PC-9 (cell line): ENCODE measurements at regions of chr7 and their contacts with region 1.

Region 1: GRCh38 chr7:17234398-17235031 is 63.9 kb upstream of the AHR start:
- DNase-seq: peak; percentile 56 to 97
- H3K4me3 ChIP-seq: peak overlapping the region; percentile 21; the same call in 1 of the 2 replicates
- H3K27ac ChIP-seq: peak overlapping the region; percentile 67
- H3K4me1 ChIP-seq: peaks cover 32% of the 10 kb centered on the region
- H3K27me3 ChIP-seq: no peaks in the 10 kb centered on the region
- CTCF ChIP-seq: no peak

Region 2: DNA sequence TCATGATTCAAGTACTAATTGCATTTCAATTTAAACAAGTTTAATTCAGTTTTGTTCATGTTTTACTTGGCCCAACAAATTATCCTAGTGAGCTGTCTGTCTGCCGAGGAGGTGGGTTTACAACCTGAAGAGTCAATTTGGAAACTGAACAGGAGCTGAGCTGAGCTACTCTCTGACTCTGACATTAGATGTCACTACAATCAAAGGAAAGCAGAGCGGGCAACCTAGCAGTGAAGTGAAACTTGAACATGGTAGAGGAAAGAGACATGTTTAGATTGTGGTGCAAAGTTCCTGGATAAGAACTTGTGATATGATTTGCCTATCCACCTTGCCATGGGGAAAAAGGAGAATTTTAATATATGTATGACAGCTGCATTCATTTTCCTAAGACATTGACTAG is 343.2 kb before region 1 on chr7:
- CTCF ChIA-PET with region 1: no interaction called
- POLR2A ChIA-PET with region 1: no interaction called
- intact Hi-C with region 1: no loop called
- DNase-seq: peak; percentile 44 to 73
- H3K4me3 ChIP-seq: no peak overlapping the region
- H3K27ac ChIP-seq: no peak overlapping the region
- H3K4me1 ChIP-seq: peaks cover 15% of the 10 kb centered on the region
- H3K27me3 ChIP-seq: no peaks in the 10 kb centered on the region
- CTCF ChIP-seq: peak; percentile 84

Region 3: GRCh38 chr7:17195576-17195975 is 38.9 kb before region 1 on chr7:
- CTCF ChIA-PET with region 1: no interaction called
- POLR2A ChIA-PET with region 1: no interaction called
- intact Hi-C with region 1: no loop called
- DNase-seq: no peak
- H3K4me3 ChIP-seq: no peak overlapping the region
- H3K27ac ChIP-seq: no peak overlapping the region
- H3K4me1 ChIP-seq: no peaks in the 10 kb centered on the region
- H3K27me3 ChIP-seq: no peaks in the 10 kb centered on the region
- CTCF ChIP-seq: no peak

Region 4: DNA sequence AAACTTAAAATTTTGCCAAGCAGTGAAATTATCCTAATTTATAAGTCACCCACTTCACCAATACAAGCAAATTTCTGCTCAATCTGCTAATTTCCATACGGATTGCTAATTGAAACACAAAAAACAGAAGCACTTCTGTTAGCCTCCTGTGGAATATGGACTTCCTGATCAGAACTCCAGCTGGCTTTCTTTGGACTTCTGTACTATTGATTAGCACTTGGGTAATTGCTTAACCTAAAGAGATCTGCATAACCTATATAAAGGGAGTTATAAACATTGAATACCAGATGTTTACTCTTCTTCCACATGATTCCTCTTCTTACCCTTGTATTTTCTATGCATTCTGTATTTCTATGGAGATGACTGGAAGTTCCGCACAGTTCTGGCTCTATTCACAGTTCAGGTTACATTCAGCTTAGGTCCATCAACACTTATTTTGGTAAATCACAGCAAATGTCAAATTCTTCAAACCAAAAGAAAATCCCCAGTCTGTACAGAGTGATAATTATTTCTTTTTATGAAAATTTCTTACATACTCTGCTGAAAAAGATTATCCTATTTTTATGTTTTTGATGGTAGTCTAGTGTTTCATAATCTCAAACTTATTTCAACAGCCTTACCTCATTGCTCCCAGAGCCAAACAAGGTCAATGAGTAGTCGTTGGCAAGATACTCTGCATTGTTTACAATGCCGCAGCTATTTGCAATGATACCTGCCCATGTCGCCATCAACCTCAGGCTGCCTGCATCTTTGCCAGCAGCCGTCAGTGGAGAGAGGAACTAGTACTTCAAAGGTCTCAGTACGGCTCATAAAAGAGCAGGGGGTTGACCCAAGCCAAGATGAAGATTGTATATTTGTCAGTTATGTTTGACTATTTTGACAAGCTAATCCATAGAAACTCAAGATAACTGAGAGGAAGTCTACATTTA is 289.6 kb after region 1 on chr7:
- CTCF ChIA-PET with region 1: no interaction called
- POLR2A ChIA-PET with region 1: no interaction called
- intact Hi-C with region 1: loop called (anchors 10 kb)
- DNase-seq: peak; percentile 64 to 94
- H3K4me3 ChIP-seq: no peak overlapping the region
- H3K27ac ChIP-seq: peak overlapping the region; percentile 24
- H3K4me1 ChIP-seq: peaks cover 12% of the 10 kb centered on the region
- H3K27me3 ChIP-seq: no peaks in the 10 kb centered on the region
- CTCF ChIP-seq: no peak